Activated CD8-positive, alpha-beta memory T cell treated with anti-CD3 and anti-CD28 coated beads, Interleukin-2, amount 10 ng/mL, durations not matched to agents 7 days and 5 days (primary cell): ENCODE measurements at regions of chr10 and their contacts with region 1.

Region 1: DNA sequence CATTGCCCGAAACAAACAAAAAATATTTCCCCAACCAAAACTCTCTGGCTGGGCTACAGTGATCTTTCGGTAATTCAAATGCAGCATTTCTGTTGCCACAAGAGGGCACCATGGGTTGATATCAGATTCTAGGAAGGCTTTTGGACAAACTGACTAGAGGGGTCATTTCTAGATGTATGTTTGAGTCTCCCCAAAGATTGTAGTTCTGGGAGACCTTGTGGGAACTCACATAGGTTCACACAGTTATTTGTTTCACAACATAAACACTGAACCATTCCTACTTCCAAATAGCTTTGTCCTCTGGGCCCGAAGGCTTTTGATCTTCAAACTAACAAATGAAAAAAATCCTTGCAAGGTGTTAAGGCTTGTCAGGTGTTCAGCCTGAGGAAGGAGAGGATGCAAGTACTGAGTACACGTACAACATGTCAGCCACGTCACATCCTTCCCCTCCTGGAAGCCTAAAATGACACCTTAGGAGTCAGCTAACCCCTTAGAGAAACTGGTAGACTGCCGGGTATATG is 37.0 kb upstream of the IL15RA start:
- DNase-seq: peak; percentile 73
- ATAC-seq: peak; percentile 80
- H3K4me3 Mint-ChIP-seq: no peak overlapping the region
- H3K27ac Mint-ChIP-seq: peak overlapping the region; percentile 81
- H3K4me1 Mint-ChIP-seq: peaks cover 52% of the 10 kb centered on the region
- H3K27me3 Mint-ChIP-seq: no peaks in the 10 kb centered on the region

Region 2: GRCh38 chr10:5977471-5978229 is 36.7 kb before region 1 on chr10 and contains the start of gene IL15RA:
- CTCF ChIA-PET with region 1: interaction called, 26 read pairs
- DNase-seq: peak; percentile 95
- ATAC-seq: peak; percentile 86
- H3K4me3 Mint-ChIP-seq: peak within 1 kb of the TSS; percentile 87
- H3K27ac Mint-ChIP-seq: peak within 1 kb of the TSS; percentile 98
- H3K4me1 Mint-ChIP-seq: peaks cover 35% of the 10 kb centered on the region
- H3K27me3 Mint-ChIP-seq: no peaks in the 10 kb centered on the region
- total RNA-seq, gene IL15RA: 31.1 to 31.7 TPM

Region 3: DNA sequence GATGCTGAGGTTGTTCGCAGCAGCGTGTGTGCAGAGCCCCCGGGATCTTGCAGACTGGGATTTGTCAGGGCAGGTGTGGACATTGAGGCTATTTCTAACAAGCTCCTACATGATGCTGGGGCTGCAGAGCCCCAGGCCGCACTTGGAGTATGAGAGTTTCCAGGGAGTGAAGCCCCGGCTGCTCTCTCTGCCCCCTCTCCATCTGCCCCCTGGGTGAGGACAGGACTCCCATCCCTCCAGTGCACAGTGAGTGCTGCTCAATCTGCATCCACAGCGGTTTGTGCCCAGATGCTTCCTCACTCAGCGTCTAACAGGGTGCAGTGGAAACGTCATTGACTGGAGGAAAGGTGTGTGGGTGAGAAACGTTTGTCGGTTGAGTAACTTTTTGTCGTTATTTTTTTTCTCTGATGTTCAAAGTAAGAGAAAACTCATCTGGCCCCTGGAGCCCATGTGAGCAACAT is 22.6 kb after region 1 on chr10:
- CTCF ChIA-PET with region 1: interaction called, 13 read pairs
- DNase-seq: no peak
- ATAC-seq: no peak
- H3K4me3 Mint-ChIP-seq: no peak overlapping the region
- H3K27ac Mint-ChIP-seq: peak overlapping the region; percentile 83
- H3K4me1 Mint-ChIP-seq: peaks cover 83% of the 10 kb centered on the region
- H3K27me3 Mint-ChIP-seq: no peaks in the 10 kb centered on the region